Ascending aorta (tissue), 2 donors: ENCODE measurements at regions of chr6 and their contacts with region 1.

Region 1: GRCh38 chr6:156391061-156391672 is 386.0 kb upstream of the ARID1B start:
- DNase-seq: no peak
- H3K4me3 ChIP-seq: no peak overlapping the region
- H3K27ac ChIP-seq: no peak overlapping the region
- H3K4me1 ChIP-seq: no peaks in the 10 kb centered on the region
- H3K27me3 ChIP-seq: no peaks in the 10 kb centered on the region
- CTCF ChIP-seq: no peak

Region 2: DNA sequence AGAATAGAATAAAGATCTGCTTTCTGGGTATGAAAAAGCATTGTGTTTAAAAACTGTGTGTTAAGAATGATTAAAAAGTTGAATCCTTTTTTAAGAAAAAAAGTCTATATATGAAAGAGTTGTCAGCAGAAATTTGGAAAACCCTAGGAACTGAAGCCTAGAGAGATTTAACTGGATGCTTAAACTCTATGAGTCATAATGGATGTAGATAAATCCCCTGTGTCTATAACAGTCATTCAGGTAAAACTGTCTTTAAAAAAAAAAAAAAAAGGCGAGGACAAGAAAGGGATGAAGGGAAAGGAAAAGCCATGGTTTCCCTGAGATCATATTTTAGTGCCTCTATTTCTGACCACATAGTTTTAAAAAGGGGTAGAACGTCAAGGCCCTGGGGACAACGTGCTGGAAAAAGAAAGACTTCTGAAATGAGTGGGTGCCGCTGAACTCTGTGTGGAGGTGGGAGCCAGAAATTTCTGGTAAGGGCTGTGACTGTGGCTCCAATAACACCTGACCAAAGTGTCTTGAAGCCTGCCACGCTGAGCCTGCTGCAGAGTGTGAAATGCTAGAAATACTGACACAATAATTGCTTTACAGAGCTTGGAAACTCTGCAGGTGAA is 83.4 kb after region 1 on chr6:
- intact Hi-C with region 1: loop called (anchors 5 kb)
- DNase-seq: no peak
- H3K4me3 ChIP-seq: no peak overlapping the region
- H3K27ac ChIP-seq: no peak overlapping the region
- H3K4me1 ChIP-seq: no peaks in the 10 kb centered on the region
- H3K27me3 ChIP-seq: no peaks in the 10 kb centered on the region
- CTCF ChIP-seq: no peak